ENCODE measurements at regions of chr14 and their contacts with region 1.

Region 1: DNA sequence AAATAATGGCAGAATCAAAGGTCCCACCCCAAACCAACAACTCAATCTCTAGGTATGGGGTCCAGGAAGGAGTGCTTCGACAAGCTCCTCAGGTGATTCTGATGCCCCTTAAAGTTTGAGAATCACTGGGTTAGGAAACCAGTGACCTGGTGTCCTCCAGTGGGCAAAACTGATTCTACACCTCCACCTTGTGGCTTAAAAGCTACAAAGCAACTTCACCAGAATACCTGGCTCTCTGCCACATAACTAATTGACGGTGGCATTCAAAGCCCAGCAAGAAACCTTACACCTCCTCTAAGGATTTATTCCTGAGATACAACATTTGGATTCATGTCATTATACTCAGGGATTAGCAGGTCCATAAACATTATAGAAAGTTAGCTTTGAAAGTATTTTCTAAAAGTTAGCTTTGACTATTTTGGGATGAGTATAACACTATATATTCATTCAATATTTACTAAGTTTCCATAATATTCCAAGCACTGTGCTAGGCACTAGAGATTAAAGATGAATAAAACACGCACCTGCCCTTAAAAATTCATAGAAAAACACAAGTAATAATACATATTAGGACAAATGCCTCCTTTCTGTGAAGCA is 45.4 kb downstream of the DCAF5 start:
- DNase-seq: peak in 1 of 3 donors; percentile 64
- ATAC-seq: peak; percentile 85
- H3K4me3 ChIP-seq: no peak overlapping the region
- H3K4me1 ChIP-seq: peaks cover 8% of the 10 kb centered on the region
- CTCF ChIP-seq: peak; percentile 40

Region 2: DNA sequence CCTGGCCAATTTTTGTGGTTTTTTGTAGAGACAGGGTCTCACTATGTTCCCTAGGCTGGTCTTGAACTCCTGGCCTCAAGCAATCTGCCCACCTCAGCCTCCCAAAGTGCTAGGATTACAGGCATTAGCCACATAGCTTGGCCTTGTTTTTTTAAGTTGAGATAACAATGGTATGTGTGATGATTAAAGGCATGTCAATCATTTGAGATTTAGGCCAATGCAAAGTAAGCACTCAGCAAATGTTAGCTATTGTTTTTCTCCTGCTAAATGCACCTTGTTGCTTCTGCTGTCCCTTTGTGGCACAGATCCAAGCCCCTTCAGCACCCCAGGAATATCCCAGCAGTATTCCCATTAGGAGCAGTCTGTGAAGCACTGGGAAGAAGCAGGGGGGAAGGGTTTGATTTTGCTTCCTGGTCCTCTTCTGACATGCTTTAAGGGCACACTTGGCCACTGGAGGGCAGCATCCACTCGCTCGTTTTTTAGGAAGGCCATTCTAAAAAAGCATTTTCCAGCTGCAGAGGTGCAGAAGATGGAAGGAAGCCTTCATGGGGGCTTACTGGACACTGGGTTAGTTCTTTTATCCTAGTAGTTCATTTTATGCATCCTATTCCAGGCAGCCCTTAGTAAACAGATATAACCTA is 244.4 kb before region 1 on chr14:
- intact Hi-C with region 1: loop called in 1 of 2 experiments (anchors 5 kb)
- DNase-seq: peak in 2 of 3 donors; percentile 86 to 91
- ATAC-seq: peak; percentile 91
- H3K4me3 ChIP-seq: no peak overlapping the region
- H3K4me1 ChIP-seq: no peaks in the 10 kb centered on the region
- CTCF ChIP-seq: peak; percentile 40

Region 3: GRCh38 chr14:68911594-68912227 is 195.8 kb before region 1 on chr14:
- intact Hi-C with region 1: loop called in 1 of 2 experiments (anchors 10 kb)
- DNase-seq: peak in 2 of 3 donors; percentile 74 to 78
- ATAC-seq: peak; percentile 95
- H3K4me3 ChIP-seq: no peak overlapping the region
- H3K4me1 ChIP-seq: no peaks in the 10 kb centered on the region
- CTCF ChIP-seq: peak; percentile 93